BJ (cell line): ENCODE measurements at regions of chr12 and their contacts with region 1.

Region 1: GRCh38 chr12:7638760-7639555 is 26.8 kb downstream of the APOBEC1 start:
- DNase-seq: peak; percentile 17
- H3K4me3 ChIP-seq: no peak overlapping the region
- H3K27me3 ChIP-seq: no peaks in the 10 kb centered on the region
- CTCF ChIP-seq: peak; percentile 68

Region 2: DNA sequence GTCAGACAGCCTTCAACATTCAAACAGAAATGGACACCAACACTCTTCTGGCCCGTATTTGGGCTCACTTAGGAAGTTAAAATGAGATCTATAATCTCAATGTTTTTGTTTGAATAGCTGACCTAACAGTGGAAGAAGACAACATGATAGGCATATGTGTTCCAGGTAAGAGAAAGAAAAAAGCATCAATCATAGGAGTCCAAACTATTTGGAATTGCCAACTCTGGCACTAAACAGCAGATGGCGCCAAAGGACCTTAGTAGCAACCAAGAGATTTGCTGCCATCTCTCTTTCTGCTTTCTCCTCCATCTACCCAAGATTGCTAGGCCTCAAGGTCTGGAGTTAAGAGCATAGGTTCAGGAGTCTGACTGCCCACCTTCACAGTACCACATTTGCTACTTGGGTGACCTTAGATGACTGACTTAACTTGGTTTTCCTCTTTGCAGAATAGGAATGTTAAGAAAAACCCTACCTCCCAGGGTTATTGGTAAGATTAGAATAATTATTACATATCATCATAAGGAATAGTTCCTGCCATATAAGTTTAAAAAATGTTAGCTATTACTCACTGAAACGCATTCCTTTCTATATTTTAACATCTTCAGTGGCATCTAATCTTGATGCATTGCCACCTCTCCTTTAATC is 419.2 kb before region 1 on chr12:
- CTCF ChIA-PET with region 1: interaction called, 29 read pairs
- POLR2A ChIA-PET with region 1: no interaction called
- DNase-seq: no peak
- H3K4me3 ChIP-seq: no peak overlapping the region
- H3K27me3 ChIP-seq: peaks cover 3% of the 10 kb centered on the region; the same call in 1 of the 2 replicates
- CTCF ChIP-seq: peak; percentile 87

Region 3: DNA sequence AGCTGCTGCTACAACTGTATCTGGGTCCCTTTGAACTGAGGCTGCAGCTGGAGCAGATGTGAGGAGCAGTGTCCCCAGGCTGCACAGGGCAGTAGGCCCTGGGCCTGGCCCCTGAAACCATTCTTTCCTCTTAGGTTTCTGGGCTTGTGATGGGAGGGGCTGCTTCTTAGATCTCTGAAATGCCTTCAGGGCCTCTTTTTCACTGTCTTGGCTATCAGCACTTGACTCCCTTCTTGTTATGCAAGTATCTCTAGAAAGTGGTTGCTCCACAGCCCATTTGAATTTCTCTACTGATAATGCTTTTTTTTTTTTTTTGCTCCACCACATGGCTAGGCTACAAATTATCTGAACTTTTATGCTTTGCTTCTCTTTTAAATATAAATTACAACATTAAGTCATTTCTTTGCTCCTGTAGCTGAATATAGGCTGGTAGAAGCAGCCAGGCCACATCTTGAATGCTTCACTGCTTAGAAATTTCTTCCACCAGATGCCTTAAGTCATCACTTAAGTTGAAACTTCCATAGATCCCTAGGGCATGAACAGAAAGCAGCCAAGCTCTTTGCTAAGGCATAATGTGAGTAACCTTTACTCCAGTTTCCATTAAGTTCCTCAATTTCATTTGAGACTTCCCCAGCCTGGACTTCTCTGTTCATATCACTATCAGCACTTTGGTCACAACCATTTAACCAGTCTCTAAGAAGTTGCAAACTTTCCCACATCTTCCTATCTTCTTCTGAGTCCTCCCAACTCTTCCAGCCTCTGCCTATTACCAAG is 293.9 kb before region 1 on chr12:
- CTCF ChIA-PET with region 1: no interaction called
- POLR2A ChIA-PET with region 1: no interaction called
- DNase-seq: no peak
- H3K4me3 ChIP-seq: no peak overlapping the region
- H3K27me3 ChIP-seq: no peaks in the 10 kb centered on the region
- CTCF ChIP-seq: no peak

Region 4: DNA sequence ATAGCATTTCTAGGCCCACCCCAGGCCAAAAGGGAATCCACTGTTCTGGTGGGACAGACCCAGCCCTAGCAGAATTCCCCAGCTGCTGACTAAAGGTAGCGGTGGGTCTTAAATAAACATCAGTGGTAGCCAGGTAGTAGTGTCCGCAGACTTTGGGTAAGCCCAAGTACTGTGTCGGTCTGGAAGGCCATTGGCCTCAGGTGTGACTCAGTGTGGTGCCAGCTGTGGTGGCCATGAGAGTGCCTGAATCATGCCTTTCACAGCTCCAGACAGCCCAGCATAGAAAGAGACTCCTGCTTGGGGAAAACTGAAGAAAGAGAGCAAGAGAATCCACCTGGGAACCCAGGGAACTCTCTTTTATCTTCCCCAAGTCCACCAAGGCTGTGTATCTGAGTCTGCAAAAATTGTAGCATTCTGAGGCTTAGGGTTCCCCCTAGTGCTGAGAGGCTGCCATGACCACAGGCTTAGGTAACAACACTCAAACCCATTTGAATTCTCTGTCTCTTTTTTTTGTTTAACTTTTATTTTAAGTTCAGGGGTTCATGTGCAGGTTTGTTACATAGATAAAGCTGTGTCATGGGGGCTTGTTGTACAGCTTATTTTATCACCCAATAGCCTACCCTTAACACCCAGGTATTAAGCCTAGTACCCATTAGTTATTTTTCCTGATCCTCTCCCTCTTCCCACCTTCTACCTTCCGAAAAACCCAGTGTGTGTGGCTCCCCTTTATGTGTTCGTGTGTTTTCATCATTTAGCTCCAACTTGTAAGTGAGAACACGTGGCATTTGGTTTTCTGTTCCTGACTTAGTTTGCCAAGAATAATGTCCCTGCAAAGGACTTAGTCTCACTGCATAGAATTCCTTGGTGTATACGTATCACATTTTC is 178.3 kb before region 1 on chr12:
- CTCF ChIA-PET with region 1: interaction called, 10 read pairs
- POLR2A ChIA-PET with region 1: no interaction called
- DNase-seq: no peak
- H3K4me3 ChIP-seq: no peak overlapping the region
- H3K27me3 ChIP-seq: no peaks in the 10 kb centered on the region
- CTCF ChIP-seq: peak; percentile 84

Region 5: GRCh38 chr12:7571257-7571656 is 67.7 kb before region 1 on chr12:
- CTCF ChIA-PET with region 1: no interaction called
- POLR2A ChIA-PET with region 1: no interaction called
- DNase-seq: no peak
- H3K4me3 ChIP-seq: no peak overlapping the region
- H3K27me3 ChIP-seq: no peaks in the 10 kb centered on the region
- CTCF ChIP-seq: no peak

Region 6: GRCh38 chr12:7705831-7706230 is 66.9 kb after region 1 on chr12:
- CTCF ChIA-PET with region 1: no interaction called
- POLR2A ChIA-PET with region 1: no interaction called
- DNase-seq: no peak
- H3K4me3 ChIP-seq: no peak overlapping the region
- H3K27me3 ChIP-seq: no peaks in the 10 kb centered on the region
- CTCF ChIP-seq: no peak